ENCODE measurements at regions of chr15 and their contacts with region 1.

Region 1: GRCh38 chr15:90387537-90388461 is at the start of gene IQGAP1:
- DNase-seq: peak; percentile 99
- ATAC-seq: peak; percentile 95
- H3K4me3 Mint-ChIP-seq: peak within 1 kb of the TSS; percentile 87
- H3K27ac Mint-ChIP-seq: peak within 1 kb of the TSS; percentile 90
- H3K4me1 Mint-ChIP-seq: peaks cover 44% of the 10 kb centered on the region
- H3K27me3 Mint-ChIP-seq: no peaks in the 10 kb centered on the region
- total RNA-seq, gene IQGAP1: 181 to 334 TPM

Region 2: GRCh38 chr15:90265271-90266060 is 122.3 kb before region 1 on chr15 and contains the start of gene NGRN:
- CTCF ChIA-PET with region 1: no interaction called
- POLR2A ChIA-PET with region 1: no interaction called
- intact Hi-C with region 1: loop called in 1 of 2 experiments (anchors 1 kb)
- DNase-seq: peak; percentile 95
- ATAC-seq: peak; percentile 87
- H3K4me3 Mint-ChIP-seq: peak within 1 kb of the TSS; percentile 98
- H3K27ac Mint-ChIP-seq: peak within 1 kb of the TSS; percentile 99
- H3K4me1 Mint-ChIP-seq: peaks cover 37% of the 10 kb centered on the region
- H3K27me3 Mint-ChIP-seq: no peaks in the 10 kb centered on the region
- total RNA-seq, gene NGRN: 22.0 to 23.9 TPM

Region 3: DNA sequence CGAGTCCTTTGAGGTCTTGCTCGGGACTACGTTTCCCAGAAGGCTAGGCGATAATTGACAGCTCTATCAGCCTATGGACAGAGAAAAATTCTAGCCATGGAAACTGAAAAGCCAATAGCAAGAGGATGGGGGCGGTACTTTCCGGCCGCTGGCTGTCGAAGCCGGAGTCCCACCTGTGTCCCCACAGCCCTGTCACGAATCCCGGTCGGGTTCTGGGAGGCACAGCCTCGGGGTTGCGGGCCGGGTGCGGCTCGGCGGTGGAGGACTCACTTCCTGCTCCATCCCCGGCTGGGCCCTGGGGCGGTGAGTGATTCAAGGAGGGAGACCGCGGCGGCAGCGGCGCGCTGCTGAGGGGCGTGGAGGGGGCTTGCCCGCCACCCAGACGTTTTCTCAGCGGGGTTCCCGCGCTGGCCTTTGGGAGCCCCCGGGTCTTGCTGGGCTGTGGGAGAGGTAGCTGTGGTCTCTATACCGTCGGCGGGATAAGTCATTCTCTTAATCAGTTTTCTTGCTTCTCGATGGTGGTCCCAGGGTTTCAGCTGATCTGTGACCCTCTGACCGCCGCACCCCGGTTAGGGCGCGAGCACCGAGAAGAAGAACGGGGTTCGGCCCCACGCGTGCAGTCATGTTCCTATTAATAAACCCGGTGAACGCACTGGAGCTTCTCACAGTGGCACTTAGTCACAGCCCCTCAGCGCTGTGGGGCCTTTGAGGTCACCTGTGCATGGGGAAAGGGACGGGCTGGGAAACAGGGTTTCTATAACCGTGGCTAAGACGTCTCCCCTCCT is 35.5 kb before region 1 on chr15 and contains the start of gene ZNF774:
- CTCF ChIA-PET with region 1: interaction called, 3 read pairs
- POLR2A ChIA-PET with region 1: interaction called, 3 read pairs
- intact Hi-C with region 1: loop called (anchors 1 to 5 kb)
- DNase-seq: peak; percentile 94
- ATAC-seq: peak; percentile 99
- H3K4me3 Mint-ChIP-seq: peak within 1 kb of the TSS; percentile 83
- H3K27ac Mint-ChIP-seq: peak within 1 kb of the TSS; percentile 87
- H3K4me1 Mint-ChIP-seq: peaks cover 7% of the 10 kb centered on the region
- H3K27me3 Mint-ChIP-seq: no peaks in the 10 kb centered on the region
- total RNA-seq, gene ZNF774: 1.5 to 2.0 TPM

Region 4: DNA sequence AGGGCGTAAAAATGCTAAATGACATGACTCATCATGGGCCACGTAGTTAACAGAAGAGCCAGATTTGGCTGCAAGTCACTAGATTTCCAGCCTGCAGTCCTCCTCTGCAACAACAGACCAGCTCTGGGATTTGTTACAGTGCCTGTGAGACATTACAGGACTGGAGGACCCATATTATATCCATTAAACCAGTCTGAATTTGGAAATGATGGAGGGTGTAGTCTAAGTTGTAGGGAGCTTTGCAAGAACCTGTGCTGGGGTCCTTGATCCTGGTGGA is 24.9 kb before region 1 on chr15:
- CTCF ChIA-PET with region 1: interaction called, 6 read pairs
- POLR2A ChIA-PET with region 1: interaction called, 3 read pairs
- intact Hi-C with region 1: loop called in 1 of 2 experiments (anchors 1 kb)
- DNase-seq: no peak
- ATAC-seq: no peak
- H3K4me3 Mint-ChIP-seq: no peak overlapping the region
- H3K27ac Mint-ChIP-seq: peak overlapping the region; percentile 5
- H3K4me1 Mint-ChIP-seq: peaks cover 25% of the 10 kb centered on the region
- H3K27me3 Mint-ChIP-seq: no peaks in the 10 kb centered on the region

Region 5: DNA sequence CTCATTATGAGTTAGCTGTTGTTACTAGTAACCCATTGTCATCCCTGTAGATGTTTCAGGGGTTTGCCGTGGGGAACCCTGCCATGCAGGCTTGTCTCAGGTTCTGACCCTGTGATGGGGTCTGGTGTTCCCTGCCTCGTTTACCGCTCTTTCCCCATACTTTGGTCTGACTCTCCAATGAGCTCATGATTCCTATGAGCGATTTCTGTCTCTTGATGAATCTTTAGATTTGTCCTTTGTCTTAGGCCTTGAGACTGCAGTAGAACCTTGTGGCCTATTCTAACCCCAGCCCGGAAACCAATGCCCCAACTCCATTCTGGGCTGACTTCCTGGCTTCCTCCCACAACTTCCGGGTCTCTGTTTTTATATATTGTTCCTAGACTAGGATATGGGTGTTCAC is 11.0 kb before region 1 on chr15:
- CTCF ChIA-PET with region 1: interaction called, 19 read pairs
- POLR2A ChIA-PET with region 1: interaction called, 10 read pairs
- intact Hi-C with region 1: loop called in 1 of 2 experiments (anchors 1 kb)
- DNase-seq: peak; percentile 66
- ATAC-seq: peak; percentile 88
- H3K4me3 Mint-ChIP-seq: peak overlapping the region; percentile 16
- H3K27ac Mint-ChIP-seq: peak overlapping the region; percentile 94
- H3K4me1 Mint-ChIP-seq: peaks cover 31% of the 10 kb centered on the region
- H3K27me3 Mint-ChIP-seq: no peaks in the 10 kb centered on the region

Region 6: DNA sequence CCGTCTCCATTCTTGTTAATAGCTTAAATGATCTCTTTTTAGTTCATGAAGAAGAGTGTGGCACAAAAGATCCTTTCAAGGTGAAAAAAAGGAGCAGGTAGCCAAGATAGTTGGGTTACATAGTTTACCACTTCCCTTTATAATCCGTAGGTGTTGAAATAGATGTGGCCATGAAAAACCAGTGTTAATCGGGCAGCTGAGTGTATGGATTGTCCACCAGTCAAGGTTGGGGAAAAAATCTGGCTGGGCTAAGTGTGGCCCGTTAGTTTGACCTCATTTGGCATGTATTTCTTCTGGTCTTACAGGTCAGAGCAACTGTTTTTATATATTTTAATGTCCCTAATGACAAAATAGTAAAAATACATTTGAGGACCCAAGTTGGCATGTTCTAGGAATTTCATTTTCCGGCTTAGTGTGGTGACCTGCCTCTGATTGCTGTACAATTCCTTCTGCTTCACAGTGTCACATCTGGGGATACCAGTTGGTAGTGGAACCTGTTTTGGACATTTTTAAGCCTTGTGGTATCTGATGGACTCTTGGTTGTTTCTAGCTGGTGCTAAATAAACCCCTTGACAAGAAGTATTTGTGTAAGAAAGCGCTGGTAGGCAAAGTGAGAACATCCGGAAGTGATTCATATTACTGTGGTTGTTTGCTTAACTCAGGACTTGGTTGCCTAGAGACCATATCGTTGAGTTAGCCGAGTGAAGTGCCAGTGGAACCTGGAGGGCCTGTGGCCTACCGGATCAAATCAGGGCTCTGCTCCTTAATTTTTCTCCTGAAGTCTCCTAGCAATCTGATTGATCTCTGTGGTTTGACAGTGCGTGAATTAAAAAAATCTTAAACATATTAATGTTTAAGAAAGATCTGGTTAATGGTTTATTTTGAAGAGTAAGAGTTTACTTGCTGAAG is 12.9 kb after region 1 on chr15:
- CTCF ChIA-PET with region 1: interaction called, 5 read pairs
- POLR2A ChIA-PET with region 1: interaction called, 4 read pairs
- intact Hi-C with region 1: loop called in 1 of 2 experiments (anchors 1 kb)
- DNase-seq: peak; percentile 73
- ATAC-seq: peak; percentile 99
- H3K4me3 Mint-ChIP-seq: peak overlapping the region; percentile 59
- H3K27ac Mint-ChIP-seq: peak overlapping the region; percentile 95
- H3K4me1 Mint-ChIP-seq: peaks cover 69% of the 10 kb centered on the region
- H3K27me3 Mint-ChIP-seq: no peaks in the 10 kb centered on the region

Region 7: DNA sequence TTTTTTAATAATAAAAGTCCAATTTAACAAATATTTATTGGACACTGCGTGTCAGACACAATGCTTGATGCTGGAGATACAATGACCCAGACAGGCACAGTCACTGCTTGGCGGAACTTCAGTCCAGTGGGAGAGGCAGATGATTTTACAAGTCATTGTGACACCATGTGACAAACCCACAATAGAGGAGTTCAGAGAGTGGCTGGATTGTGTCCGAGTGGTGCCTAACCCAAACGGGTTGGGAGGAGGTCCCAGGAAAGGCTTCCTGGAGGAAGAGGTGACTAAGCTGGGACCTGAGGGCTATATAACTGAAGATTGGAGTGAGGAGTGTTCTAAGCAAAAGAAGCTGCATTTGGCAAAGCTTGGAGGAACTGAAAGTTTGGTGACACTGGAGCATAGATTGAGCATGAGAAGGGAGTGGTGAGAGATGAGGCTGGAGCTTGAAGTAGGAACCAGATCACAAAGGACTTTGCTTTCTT is 183.3 kb after region 1 on chr15:
- CTCF ChIA-PET with region 1: no interaction called
- POLR2A ChIA-PET with region 1: no interaction called
- intact Hi-C with region 1: no loop called
- DNase-seq: no peak
- ATAC-seq: no peak
- H3K4me3 Mint-ChIP-seq: no peak overlapping the region
- H3K27ac Mint-ChIP-seq: peak overlapping the region; percentile 28
- H3K4me1 Mint-ChIP-seq: peaks cover 86% of the 10 kb centered on the region
- H3K27me3 Mint-ChIP-seq: no peaks in the 10 kb centered on the region